GM12878 (cell line): ENCODE measurements at regions of chr12 and their contacts with region 1.

Region 1: GRCh38 chr12:121443193-121443870 is 43.4 kb downstream of the RNF34 start:
- DNase-seq: no peak
- ATAC-seq: peak; percentile 95
- H3K4me3 ChIP-seq: no peak overlapping the region
- H3K27ac ChIP-seq: no peak overlapping the region
- H3K4me1 ChIP-seq: no peaks in the 10 kb centered on the region
- H3K27me3 ChIP-seq: no peaks in the 10 kb centered on the region
- CTCF ChIP-seq: peak; percentile 76 to 92 (median 84)
- EP300 ChIP-seq: no peak
- POLR2A ChIP-seq: no peak
- RAD21 ChIP-seq: peak; percentile 76

Region 2: DNA sequence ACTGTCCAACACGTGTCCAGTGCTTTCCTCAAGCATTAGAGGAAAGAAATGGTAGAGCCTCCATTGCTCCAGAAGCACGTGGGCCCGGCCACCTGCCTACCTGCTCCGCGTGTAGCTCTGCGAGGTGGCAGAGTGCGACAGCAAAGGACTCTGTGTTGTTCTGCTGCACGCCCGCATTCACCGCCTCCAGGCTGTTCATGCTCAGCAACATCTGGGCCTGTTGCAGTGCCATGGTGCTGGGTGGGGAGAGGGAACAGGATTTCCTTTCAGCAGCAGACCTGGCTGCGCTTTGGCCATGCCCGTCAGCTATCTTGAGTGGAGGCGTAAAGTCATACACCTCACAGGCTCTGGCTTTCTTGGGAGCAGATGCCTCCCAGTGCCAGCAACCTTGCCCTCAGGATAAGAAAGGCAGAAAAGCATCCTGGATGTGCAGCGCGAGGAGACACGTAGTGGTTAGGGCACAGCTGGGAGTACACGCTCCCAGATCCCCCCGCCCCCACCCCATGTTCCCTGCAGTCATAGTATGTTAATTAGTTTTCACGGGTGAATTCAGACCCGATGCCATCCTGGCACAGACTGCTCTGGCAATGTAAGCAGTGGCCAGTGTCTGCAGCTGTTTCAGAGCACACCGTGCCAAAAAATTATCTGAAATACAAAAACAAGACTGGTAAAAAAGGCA is 116.2 kb before region 1 on chr12:
- CTCF ChIA-PET with region 1: interaction called, 90 read pairs
- POLR2A ChIA-PET with region 1: no interaction called
- RAD21 ChIA-PET with region 1: interaction called, 3 read pairs
- SMC1A ChIA-PET with region 1: interaction called, 31 read pairs
- in situ Hi-C with region 1: loop called (anchors 25 kb)
- intact Hi-C with region 1: no loop called
- DNase-seq: no peak
- ATAC-seq: no peak
- H3K4me3 ChIP-seq: no peak overlapping the region
- H3K27ac ChIP-seq: no peak overlapping the region
- H3K4me1 ChIP-seq: no peaks in the 10 kb centered on the region; the same call in 1 of the 2 replicates
- H3K27me3 ChIP-seq: no peaks in the 10 kb centered on the region
- CTCF ChIP-seq: no peak
- EP300 ChIP-seq: no peak
- POLR2A ChIP-seq: no peak
- RAD21 ChIP-seq: no peak

Region 3: DNA sequence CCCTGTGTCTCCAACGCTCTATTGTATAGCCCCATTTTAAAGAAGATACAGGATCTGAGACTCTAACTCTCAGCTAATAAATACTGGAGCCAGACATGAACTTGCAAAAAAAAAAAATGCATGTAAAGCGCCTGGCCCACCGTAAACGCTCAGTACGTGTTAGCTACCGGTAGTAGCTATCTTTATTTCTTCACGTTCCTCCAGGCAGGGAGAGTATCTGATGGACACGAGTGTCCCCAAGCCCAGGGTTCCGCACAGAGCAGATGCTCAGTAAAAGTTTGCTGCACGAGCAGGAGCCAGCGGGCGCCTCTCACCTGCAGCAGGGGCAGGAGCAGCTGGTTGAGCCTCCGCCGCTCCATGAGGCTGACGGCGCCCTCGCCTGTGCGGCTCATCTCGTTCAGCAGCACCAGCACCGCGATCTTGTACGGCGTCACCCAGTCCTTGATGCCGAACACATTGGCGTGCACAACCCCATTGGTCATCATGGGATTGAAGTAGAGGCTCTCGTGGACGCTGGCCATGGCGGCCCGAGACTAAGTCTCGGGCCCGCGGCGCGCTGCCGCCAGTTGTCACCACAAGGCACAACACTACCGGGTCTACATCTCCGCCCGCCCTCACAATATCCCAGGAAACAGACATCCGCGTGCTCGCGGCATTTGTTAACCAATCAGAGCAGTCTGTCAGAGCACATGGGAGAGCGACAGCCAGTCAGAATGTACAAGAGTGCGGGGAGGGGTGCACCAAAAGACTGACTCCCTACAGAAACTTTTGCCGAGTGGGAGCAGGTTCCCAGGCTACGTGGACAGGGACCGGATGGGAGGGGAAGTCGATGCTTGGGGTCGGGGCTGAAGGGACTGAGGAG is 91.3 kb before region 1 on chr12 and contains the start of gene ANAPC5:
- CTCF ChIA-PET with region 1: interaction called, 10 read pairs
- POLR2A ChIA-PET with region 1: no interaction called
- RAD21 ChIA-PET with region 1: interaction called, 9 read pairs
- SMC1A ChIA-PET with region 1: interaction called, 4 read pairs
- in situ Hi-C with region 1: loop called (anchors 25 kb)
- intact Hi-C with region 1: loop called (anchors 1 kb)
- DNase-seq: peak; percentile 98
- ATAC-seq: peak; percentile 99
- H3K4me3 ChIP-seq: peak within 1 kb of the TSS; percentile 88
- H3K27ac ChIP-seq: peak within 1 kb of the TSS; percentile 77
- H3K4me1 ChIP-seq: no peaks in the 10 kb centered on the region; the same call in 1 of the 2 replicates
- H3K27me3 ChIP-seq: no peaks in the 10 kb centered on the region
- CTCF ChIP-seq: peak in 1 of 3 experiments; percentile 1; a peak in 1 of 6 replicates
- EP300 ChIP-seq: no peak
- POLR2A ChIP-seq: peak; percentile 95
- RAD21 ChIP-seq: no peak
- polyA plus RNA-seq, gene ANAPC5: 102 to 142 TPM

Region 4: DNA sequence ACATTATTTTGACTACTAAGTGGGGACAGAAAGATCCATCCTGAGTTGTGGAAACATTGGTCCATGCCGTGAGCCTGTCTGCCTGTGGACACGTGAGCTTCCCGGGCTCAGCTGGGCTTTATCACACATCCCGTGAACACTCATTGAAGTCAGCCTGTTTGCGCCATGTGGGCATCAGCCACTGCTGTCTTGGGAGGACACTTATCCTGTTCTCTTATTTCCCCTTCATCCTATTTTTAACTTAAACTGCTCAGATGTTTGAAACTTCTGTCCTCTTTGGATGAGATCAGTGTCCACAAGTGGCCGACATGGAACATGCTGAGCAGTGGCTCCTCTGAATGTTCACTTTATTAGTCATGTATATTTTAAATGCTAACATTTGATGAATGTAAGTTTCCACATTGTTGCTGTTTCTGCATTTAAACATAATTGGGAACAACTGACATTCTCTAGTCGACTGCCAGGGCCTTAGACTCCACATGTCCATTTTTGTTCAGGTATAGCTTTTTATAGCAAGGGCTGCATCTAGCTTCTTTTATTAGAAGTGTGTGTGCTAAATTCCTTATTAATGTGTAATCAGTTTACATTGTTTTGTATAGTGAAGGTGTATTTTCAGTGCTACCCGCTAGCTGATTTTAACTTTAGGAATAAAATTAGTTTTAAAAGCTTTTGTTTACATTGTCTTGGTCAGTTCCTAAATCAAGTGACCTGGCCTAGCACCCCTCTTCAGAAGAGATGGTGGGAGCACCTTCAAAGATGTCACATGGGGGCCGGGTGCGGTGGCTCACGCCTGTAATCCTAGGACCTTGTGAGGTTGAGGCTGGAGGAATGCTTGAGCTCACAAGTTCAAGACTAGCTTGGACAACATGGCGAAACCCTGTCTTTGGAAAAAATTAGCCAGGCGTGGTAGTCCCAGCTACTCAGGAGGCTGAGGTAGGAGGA is 19.4 kb before region 1 on chr12:
- CTCF ChIA-PET with region 1: interaction called, 13 read pairs
- POLR2A ChIA-PET with region 1: interaction called, 5 read pairs
- RAD21 ChIA-PET with region 1: interaction called, 9 read pairs
- SMC1A ChIA-PET with region 1: interaction called, 4 read pairs
- in situ Hi-C with region 1: no loop called
- intact Hi-C with region 1: no loop called
- DNase-seq: no peak
- ATAC-seq: no peak
- H3K4me3 ChIP-seq: no peak overlapping the region
- H3K27ac ChIP-seq: 0 out of 2 replicates have a peak overlapping the region, but pooled peaks have one; percentile 6
- H3K4me1 ChIP-seq: peaks cover 22% of the 10 kb centered on the region
- H3K27me3 ChIP-seq: no peaks in the 10 kb centered on the region
- CTCF ChIP-seq: no peak
- EP300 ChIP-seq: no peak
- POLR2A ChIP-seq: no peak; the same call in 1 of the 2 replicates
- RAD21 ChIP-seq: no peak

Region 5: DNA sequence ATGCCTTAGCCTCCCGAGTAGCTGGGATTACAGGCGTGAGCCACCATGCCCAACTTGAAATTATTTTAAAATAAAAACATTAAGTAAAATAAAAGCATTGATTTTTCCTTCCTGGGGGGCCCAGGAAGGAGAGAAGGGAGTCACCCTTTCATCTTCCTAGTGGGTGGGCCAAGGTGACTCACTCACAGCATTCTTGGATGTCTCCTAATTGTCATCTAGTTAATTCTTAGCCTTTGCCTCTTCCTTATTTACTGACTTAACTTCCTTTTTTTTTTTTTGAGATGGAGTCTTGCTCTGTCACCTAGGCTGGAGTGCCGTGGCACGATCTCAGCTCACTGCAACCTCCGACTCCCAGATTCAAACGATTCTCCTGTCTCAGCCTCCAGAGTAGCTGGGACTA is 298.4 kb after region 1 on chr12:
- CTCF ChIA-PET with region 1: no interaction called
- POLR2A ChIA-PET with region 1: no interaction called
- RAD21 ChIA-PET with region 1: no interaction called
- SMC1A ChIA-PET with region 1: no interaction called
- in situ Hi-C with region 1: no loop called
- intact Hi-C with region 1: no loop called
- DNase-seq: no peak
- ATAC-seq: no peak
- H3K4me3 ChIP-seq: no peak overlapping the region
- H3K27ac ChIP-seq: no peak overlapping the region
- H3K4me1 ChIP-seq: no peaks in the 10 kb centered on the region
- H3K27me3 ChIP-seq: no peaks in the 10 kb centered on the region
- CTCF ChIP-seq: no peak
- EP300 ChIP-seq: no peak
- POLR2A ChIP-seq: no peak
- RAD21 ChIP-seq: no peak